Natural killer cell (primary cell): ENCODE measurements at regions of chr15 and their contacts with region 1.

Region 1: GRCh38 chr15:49155110-49155833 is at the start of gene COPS2:
- DNase-seq: peak; percentile 87 to 97
- ATAC-seq: peak; percentile 92 to 99 (median 95)
- H3K4me3 ChIP-seq: peak within 1 kb of the TSS; percentile 87
- H3K4me3 Mint-ChIP-seq: peak within 1 kb of the TSS; percentile 99
- H3K27ac ChIP-seq: peak within 1 kb of the TSS; percentile 90
- H3K27ac Mint-ChIP-seq: peak within 1 kb of the TSS; percentile 95 to 99
- H3K4me1 ChIP-seq: peaks cover 7% of the 10 kb centered on the region
- H3K4me1 Mint-ChIP-seq: peaks cover 27 to 32% of the 10 kb centered on the region in 2 donors
- H3K27me3 ChIP-seq: no peaks in the 10 kb centered on the region
- H3K27me3 Mint-ChIP-seq: no peaks in the 10 kb centered on the region
- CTCF ChIP-seq: no peak
- total RNA-seq, gene COPS2: 77.6 to 90.7 (median 89.3) TPM

Region 2: GRCh38 chr15:49046220-49047102 is 108.8 kb before region 1 on chr15 and contains the start of gene SECISBP2L:
- intact Hi-C with region 1: loop called (anchors 5 kb)
- DNase-seq: peak; percentile 87 to 94
- ATAC-seq: peak; percentile 96 to 97 (median 97)
- H3K4me3 ChIP-seq: peak within 1 kb of the TSS; percentile 60
- H3K4me3 Mint-ChIP-seq: peak within 1 kb of the TSS; percentile 97
- H3K27ac ChIP-seq: peak within 1 kb of the TSS; percentile 60
- H3K27ac Mint-ChIP-seq: peak within 1 kb of the TSS; percentile 86 to 95
- H3K4me1 ChIP-seq: peaks cover 8% of the 10 kb centered on the region
- H3K4me1 Mint-ChIP-seq: peaks cover 34 to 38% of the 10 kb centered on the region in 2 donors
- H3K27me3 ChIP-seq: no peaks in the 10 kb centered on the region
- H3K27me3 Mint-ChIP-seq: no peaks in the 10 kb centered on the region
- CTCF ChIP-seq: no peak
- total RNA-seq, gene SECISBP2L: 78.8 to 97.7 (median 93.7) TPM

Region 3: GRCh38 chr15:49101536-49101935 is 53.7 kb before region 1 on chr15:
- intact Hi-C with region 1: no loop called
- DNase-seq: no peak
- ATAC-seq: no peak
- H3K4me3 ChIP-seq: no peak overlapping the region
- H3K4me3 Mint-ChIP-seq: no peak overlapping the region
- H3K27ac ChIP-seq: no peak overlapping the region
- H3K27ac Mint-ChIP-seq: no peak overlapping the region
- H3K4me1 ChIP-seq: no peaks in the 10 kb centered on the region
- H3K4me1 Mint-ChIP-seq: no peaks in the 10 kb centered on the region
- H3K27me3 ChIP-seq: no peaks in the 10 kb centered on the region
- H3K27me3 Mint-ChIP-seq: no peaks in the 10 kb centered on the region
- CTCF ChIP-seq: no peak

Region 4: GRCh38 chr15:49169880-49170597 is 14.8 kb after region 1 on chr15 and contains the start of gene GALK2:
- intact Hi-C with region 1: loop called (anchors 1 kb)
- DNase-seq: peak; percentile 65 to 91
- ATAC-seq: peak; percentile 87 to 94 (median 90)
- H3K4me3 ChIP-seq: peak within 1 kb of the TSS; percentile 87
- H3K4me3 Mint-ChIP-seq: peak within 1 kb of the TSS; percentile 100
- H3K27ac ChIP-seq: peak within 1 kb of the TSS; percentile 80
- H3K27ac Mint-ChIP-seq: peak within 1 kb of the TSS; percentile 96 to 99
- H3K4me1 ChIP-seq: peaks cover 6% of the 10 kb centered on the region
- H3K4me1 Mint-ChIP-seq: peaks cover 36 to 42% of the 10 kb centered on the region in 2 donors
- H3K27me3 ChIP-seq: no peaks in the 10 kb centered on the region
- H3K27me3 Mint-ChIP-seq: no peaks in the 10 kb centered on the region
- CTCF ChIP-seq: no peak
- total RNA-seq, gene GALK2: 19.1 to 24.3 (median 23.6) TPM

Region 5: DNA sequence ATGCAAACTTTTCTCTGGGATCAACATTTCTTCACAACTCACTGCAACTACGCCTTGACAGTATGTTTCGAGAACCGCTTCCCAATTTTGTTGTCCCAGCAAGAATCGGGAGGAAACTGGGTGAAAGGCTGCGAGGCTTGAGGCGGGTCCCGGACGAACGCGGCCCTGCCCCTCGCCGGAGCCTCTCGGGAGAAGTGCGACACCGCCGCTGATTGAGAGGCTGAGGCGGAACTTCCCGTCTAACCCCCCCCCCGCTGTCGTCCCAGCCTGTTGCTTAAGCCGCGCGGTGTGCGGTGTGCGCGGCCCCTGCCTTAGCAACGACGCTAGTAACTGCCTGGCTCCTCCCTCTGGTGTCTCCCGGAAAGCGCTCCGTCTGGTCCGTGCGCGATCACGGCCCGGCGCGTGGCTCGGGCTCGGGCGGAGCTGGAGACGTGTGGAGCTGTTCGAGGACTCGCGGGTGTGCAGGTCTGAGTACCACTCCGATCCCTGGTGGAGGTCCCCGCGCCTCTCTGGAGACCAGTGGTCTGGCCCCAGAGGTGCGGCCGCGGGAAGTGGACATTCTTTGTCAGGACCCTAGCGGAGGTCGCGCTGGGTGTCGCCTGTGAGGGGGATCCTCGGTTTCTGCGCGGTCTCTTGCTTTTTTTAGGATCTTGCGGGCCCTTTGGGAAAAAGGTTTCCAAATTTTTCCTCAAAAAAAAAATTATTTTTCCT is 465.5 kb after region 1 on chr15 and contains the starts of genes DTWD1 and FAM227B:
- intact Hi-C with region 1: loop called (anchors 5 kb)
- DNase-seq: peak; percentile 88 to 97
- ATAC-seq: peak; percentile 96 to 100 (median 98)
- H3K4me3 ChIP-seq: peak within 1 kb of the TSS; percentile 97
- H3K4me3 Mint-ChIP-seq: peak within 1 kb of the TSS; percentile 98
- H3K27ac ChIP-seq: peak within 1 kb of the TSS; percentile 82
- H3K27ac Mint-ChIP-seq: peak within 1 kb of the TSS; percentile 96 to 97
- H3K4me1 ChIP-seq: peaks cover 6% of the 10 kb centered on the region
- H3K4me1 Mint-ChIP-seq: peaks cover 33 to 37% of the 10 kb centered on the region in 2 donors
- H3K27me3 ChIP-seq: no peaks in the 10 kb centered on the region
- H3K27me3 Mint-ChIP-seq: no peaks in the 10 kb centered on the region
- CTCF ChIP-seq: no peak
- total RNA-seq, gene DTWD1: 10.0 to 14.1 (median 12.3) TPM
- total RNA-seq, gene FAM227B: 3.8 to 5.0 (median 4.9) TPM

Region 6: DNA sequence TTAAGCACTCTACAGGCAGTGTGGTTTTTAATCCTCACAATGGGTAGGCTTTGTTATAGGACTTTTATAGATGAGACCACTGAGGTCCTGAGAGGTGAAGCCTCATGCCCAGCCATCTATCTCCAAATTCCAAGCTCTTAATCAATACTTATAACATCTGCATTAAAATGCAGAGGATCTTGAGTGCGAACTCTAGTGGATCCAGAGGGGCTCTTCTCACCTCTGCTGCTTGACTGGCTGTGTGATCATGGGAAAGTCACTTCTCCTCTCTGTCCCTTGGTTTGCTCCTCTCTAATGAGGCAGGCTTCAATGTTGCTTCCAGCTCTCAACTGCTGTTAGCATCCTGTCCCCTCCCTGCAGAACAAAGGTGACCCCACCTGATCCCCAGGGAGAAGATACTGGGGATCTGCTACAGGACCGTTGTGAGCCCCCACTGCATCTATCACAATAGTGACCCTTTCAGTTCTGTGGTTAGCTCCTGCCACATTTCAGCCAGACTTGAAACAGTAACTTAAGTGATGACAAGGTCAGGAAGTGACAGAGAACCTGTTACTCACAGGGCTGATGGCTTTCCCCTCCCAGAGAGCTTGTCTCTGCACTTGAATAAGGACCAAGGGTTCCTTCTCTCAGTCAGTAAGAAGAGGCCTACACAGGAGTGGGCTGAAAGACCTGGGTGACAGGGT is 1028.0 kb after region 1 on chr15:
- intact Hi-C with region 1: no loop called
- DNase-seq: peak in 1 of 2 donors; percentile 13
- ATAC-seq: peak; percentile 36 to 67 (median 49)
- H3K4me3 ChIP-seq: peak overlapping the region; percentile 47
- H3K4me3 Mint-ChIP-seq: peak overlapping the region; percentile 93
- H3K27ac ChIP-seq: no peak overlapping the region
- H3K27ac Mint-ChIP-seq: peak overlapping the region in 1 of 2 donors; percentile 81
- H3K4me1 ChIP-seq: peaks cover 20% of the 10 kb centered on the region
- H3K4me1 Mint-ChIP-seq: peaks cover 14 to 20% of the 10 kb centered on the region in 2 donors
- H3K27me3 ChIP-seq: no peaks in the 10 kb centered on the region
- H3K27me3 Mint-ChIP-seq: peaks cover 17 to 26% of the 10 kb centered on the region in 2 donors
- CTCF ChIP-seq: no peak